Posterior cingulate gyrus (tissue), 11 donors: ENCODE measurements at regions of chr6 and their contacts with region 1.

Region 1: DNA sequence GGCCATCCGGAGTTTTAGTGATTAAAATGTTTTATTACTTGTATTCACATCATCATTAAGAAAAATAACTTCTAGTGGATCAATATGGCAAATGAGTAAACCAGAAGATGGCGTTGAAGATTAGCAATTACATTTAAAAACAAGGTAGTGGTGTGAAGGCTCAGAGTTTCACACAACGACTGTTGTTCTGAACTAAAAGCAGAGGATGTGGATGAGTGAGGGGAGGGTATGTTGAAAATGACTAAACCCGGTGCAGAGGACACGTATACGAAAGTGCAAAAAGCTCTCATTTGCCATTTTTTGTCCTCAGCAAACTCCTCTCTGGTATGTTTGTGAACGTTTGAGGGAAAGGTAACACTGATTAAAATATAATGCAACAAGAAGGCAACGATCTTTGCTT is 1.9 kb upstream of the IRF4 start:
- DNase-seq: no peak

Region 2: GRCh38 chr6:291697-292505 is 97.7 kb before region 1 on chr6 and contains the start of gene DUSP22:
- intact Hi-C with region 1: no loop called
- DNase-seq: peak; percentile 67 to 97 (median 78)

Region 3: GRCh38 chr6:408599-409102 is 19.0 kb after region 1 on chr6:
- intact Hi-C with region 1: no loop called
- DNase-seq: peak in 1 of 10 donors; percentile 70

Region 4: DNA sequence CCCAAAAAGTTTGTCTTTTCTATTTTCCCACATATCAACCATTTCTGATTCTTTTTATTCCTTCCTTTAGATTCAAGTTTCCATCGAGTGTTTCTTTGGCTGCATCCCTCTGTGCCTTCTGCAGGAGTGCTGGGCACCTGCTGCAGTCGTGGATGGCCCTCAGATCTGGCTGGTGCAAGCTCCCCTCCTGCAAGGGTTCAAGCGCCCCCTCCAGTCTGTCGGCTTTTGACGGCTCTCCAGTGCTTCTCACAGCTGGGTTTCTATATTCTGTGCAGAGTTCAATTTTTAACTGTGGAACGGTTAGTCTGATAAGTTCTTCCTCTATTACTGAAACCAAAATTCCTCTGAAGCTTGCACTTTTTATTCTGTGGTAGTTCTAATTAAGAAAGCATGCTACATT is 135.2 kb after region 1 on chr6:
- intact Hi-C with region 1: loop called (anchors 10 kb)
- DNase-seq: peak in 6 of 10 donors; percentile 22 to 87 (median 60)